HepG2 (cell line): ENCODE measurements at regions of chr17 and their contacts with region 1.

Region 1: GRCh38 chr17:17445925-17446665 is 30.7 kb upstream of the MED9 start:
- DNase-seq: peak; percentile 98
- ATAC-seq: peak; percentile 89
- H3K4me3 ChIP-seq: peak overlapping the region; percentile 46 to 64 (median 57); a peak in 4 of 6 replicates
- H3K27ac ChIP-seq: peak overlapping the region; percentile 65
- H3K4me1 ChIP-seq: peaks cover 79% of the 10 kb centered on the region
- H3K27me3 ChIP-seq: 0 out of 5 replicates have a peak, but pooled peaks cover 0 to 13% of the 10 kb centered on the region in 2 experiments
- CTCF ChIP-seq: peak; percentile 31
- EP300 ChIP-seq: peak; percentile 75 to 98; a peak in 3 of 4 replicates
- POLR2A ChIP-seq: peak in 1 of 2 experiments; percentile 2; a peak in 1 of 4 replicates
- RAD21 ChIP-seq: no peak

Region 2: DNA sequence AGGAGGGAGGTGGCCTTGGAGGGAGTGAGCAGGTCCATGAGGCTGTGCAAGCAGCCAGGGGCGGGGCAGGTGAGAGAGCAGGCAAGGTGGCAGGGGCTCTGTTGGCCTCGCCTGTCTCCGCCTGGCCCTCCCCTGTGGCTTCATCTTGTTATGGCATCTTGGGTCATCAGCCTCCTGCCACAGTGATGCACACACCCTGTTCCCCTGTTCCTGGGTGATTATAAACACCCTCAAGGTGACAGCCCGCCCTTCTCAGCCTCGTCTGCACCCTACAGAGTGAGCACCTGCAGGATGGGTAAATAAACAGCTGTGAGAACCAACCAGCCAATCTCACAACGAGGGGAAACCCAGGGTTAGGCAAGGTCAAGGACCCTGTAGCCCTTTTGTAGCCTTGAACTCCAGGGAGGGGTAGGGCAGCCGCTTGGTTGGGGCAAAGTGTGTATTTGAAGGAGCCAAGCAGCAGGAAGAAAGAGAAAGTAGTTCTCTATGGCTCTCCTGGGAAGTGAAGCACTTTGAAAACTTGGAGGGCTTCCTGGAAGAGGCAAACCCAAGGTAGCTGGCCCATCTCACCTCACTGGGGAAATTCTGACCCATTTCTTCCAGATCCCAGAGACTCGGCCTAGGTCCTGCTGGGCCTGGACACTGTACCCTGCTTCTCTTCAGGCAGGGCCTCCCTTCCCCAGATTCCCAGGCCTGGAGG is 82.3 kb before region 1 on chr17:
- CTCF ChIA-PET with region 1: no interaction called
- POLR2A ChIA-PET with region 1: interaction called, 11 read pairs
- in situ Hi-C with region 1: loop called (anchors 5 kb)
- intact Hi-C with region 1: no loop called
- DNase-seq: no peak
- ATAC-seq: peak; percentile 72
- H3K4me3 ChIP-seq: peak overlapping the region; percentile 13 to 43 (median 33); a peak in 5 of 6 replicates
- H3K27ac ChIP-seq: no peak overlapping the region
- H3K4me1 ChIP-seq: peaks cover 33% of the 10 kb centered on the region
- H3K27me3 ChIP-seq: no peaks in the 10 kb centered on the region; a peak in 1 of 5 replicates
- CTCF ChIP-seq: no peak
- EP300 ChIP-seq: no peak; a peak in 1 of 4 replicates
- POLR2A ChIP-seq: no peak
- RAD21 ChIP-seq: no peak

Region 3: GRCh38 chr17:17370711-17371110 is 75.4 kb before region 1 on chr17:
- CTCF ChIA-PET with region 1: no interaction called
- POLR2A ChIA-PET with region 1: interaction called, 20 read pairs
- in situ Hi-C with region 1: no loop called
- intact Hi-C with region 1: no loop called
- DNase-seq: no peak
- ATAC-seq: peak; percentile 25; the same call in 2 of the 3 replicates
- H3K4me3 ChIP-seq: no peak overlapping the region
- H3K27ac ChIP-seq: no peak overlapping the region
- H3K4me1 ChIP-seq: peaks cover 48% of the 10 kb centered on the region
- H3K27me3 ChIP-seq: no peaks in the 10 kb centered on the region
- CTCF ChIP-seq: no peak
- EP300 ChIP-seq: no peak
- POLR2A ChIP-seq: no peak
- RAD21 ChIP-seq: no peak

Region 4: GRCh38 chr17:17416007-17416399 is 30.1 kb before region 1 on chr17:
- CTCF ChIA-PET with region 1: no interaction called
- POLR2A ChIA-PET with region 1: interaction called, 44 read pairs
- in situ Hi-C with region 1: no loop called
- intact Hi-C with region 1: no loop called
- DNase-seq: peak; percentile 91
- ATAC-seq: peak; percentile 73
- H3K4me3 ChIP-seq: no peak overlapping the region
- H3K27ac ChIP-seq: peak overlapping the region; percentile 82
- H3K4me1 ChIP-seq: peaks cover 50% of the 10 kb centered on the region
- H3K27me3 ChIP-seq: no peaks in the 10 kb centered on the region
- CTCF ChIP-seq: no peak
- EP300 ChIP-seq: no peak
- POLR2A ChIP-seq: no peak
- RAD21 ChIP-seq: no peak

Region 5: DNA sequence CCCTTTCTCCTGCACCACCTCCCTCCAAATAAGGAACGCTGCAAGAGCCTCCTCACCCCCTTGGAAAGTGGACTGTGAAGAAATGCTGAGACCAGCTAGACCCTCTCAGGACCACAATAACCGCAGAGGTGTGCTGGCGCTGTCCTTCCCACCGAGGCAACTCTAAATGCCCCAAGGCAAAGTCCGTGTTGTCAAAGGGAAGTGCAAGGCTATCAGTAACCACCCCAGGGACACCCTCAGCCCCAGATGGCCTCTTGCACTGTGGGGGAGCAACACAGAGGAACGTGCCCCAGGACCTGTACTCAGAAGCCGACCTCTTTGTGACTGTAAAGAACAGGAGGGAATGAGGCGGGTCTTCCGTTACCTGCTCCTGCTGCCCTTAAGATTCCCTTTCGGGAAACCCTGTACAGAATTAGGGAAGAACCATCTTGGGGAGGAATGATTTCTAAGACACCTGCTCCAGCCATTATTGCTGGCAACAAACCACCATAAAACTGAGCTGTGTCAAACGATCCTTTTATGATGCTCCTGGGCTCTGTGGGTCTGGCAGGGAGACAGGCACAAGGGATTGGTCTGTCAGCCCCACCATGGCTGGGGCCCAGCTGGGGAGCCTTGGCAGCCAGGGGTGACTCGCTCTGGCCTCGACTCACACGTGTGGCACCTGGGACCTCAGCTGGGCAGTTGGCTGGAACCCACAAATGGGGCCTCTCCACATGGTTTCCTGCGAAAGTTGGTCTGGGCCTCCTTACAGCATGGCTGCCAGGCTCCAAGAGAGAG is 16.1 kb after region 1 on chr17:
- CTCF ChIA-PET with region 1: no interaction called
- POLR2A ChIA-PET with region 1: interaction called, 16 read pairs
- in situ Hi-C with region 1: no loop called
- intact Hi-C with region 1: no loop called
- DNase-seq: peak; percentile 61
- ATAC-seq: peak; percentile 95
- H3K4me3 ChIP-seq: peak overlapping the region; percentile 25 to 59 (median 41); a peak in 4 of 6 replicates
- H3K27ac ChIP-seq: peak overlapping the region; percentile 45
- H3K4me1 ChIP-seq: peaks cover 47% of the 10 kb centered on the region
- H3K27me3 ChIP-seq: peaks cover 2 to 13% of the 10 kb centered on the region in 2 experiments; a peak in 4 of 5 replicates
- CTCF ChIP-seq: peak; percentile 51
- EP300 ChIP-seq: peak in 1 of 2 experiments; percentile 76; a peak in 2 of 4 replicates
- POLR2A ChIP-seq: peak in 1 of 2 experiments; percentile 52; a peak in 2 of 4 replicates
- RAD21 ChIP-seq: no peak

Region 6: DNA sequence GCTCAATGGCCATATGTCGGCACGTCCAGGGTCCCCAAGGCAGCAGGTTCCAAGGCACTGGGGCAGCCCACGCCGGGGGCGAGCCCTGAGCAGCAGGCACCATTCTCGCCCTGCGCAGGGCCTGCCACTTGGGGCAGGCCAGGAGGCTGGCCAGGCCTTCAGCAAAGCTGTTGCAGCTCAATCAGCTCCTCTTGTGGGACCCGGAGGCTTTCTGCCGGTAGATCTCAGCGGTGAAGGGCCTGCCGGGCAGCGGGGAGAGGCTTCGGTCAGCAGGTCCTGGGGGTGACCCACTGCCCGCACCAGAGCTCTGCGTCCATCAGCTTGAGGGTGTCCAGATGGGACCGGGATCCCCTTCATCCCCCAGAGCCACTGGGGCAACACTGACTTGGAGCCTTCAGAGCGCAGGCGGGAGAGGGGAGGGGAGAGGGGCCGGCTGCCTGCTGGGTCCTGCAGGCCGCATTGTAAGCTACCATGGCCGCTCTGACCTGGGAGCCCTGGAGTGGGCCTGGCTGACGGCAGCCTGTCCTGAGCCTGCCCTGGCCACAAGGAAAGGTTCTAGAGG is 59.6 kb after region 1 on chr17:
- CTCF ChIA-PET with region 1: no interaction called
- POLR2A ChIA-PET with region 1: no interaction called
- in situ Hi-C with region 1: no loop called
- intact Hi-C with region 1: no loop called
- DNase-seq: no peak
- ATAC-seq: no peak
- H3K4me3 ChIP-seq: no peak overlapping the region
- H3K27ac ChIP-seq: no peak overlapping the region
- H3K4me1 ChIP-seq: no peaks in the 10 kb centered on the region
- H3K27me3 ChIP-seq: peaks cover 0 to 19% of the 10 kb centered on the region in 2 experiments; a peak in 2 of 5 replicates
- CTCF ChIP-seq: no peak
- EP300 ChIP-seq: no peak
- POLR2A ChIP-seq: no peak
- RAD21 ChIP-seq: no peak